AG04449 (cell line): ENCODE measurements at regions of chr1 and their contacts with region 1.

Region 1: GRCh38 chr1:39973503-39974135 is 18.7 kb downstream of the MFSD2A start:
- DNase-seq: no peak
- H3K4me3 ChIP-seq: no peak overlapping the region
- CTCF ChIP-seq: peak; percentile 92

Region 2: GRCh38 chr1:39816415-39817090 is 157.1 kb before region 1 on chr1:
- CTCF ChIA-PET with region 1: interaction called, 206 read pairs
- POLR2A ChIA-PET with region 1: no interaction called
- DNase-seq: peak; percentile 49
- H3K4me3 ChIP-seq: no peak overlapping the region
- CTCF ChIP-seq: peak; percentile 81

Region 3: DNA sequence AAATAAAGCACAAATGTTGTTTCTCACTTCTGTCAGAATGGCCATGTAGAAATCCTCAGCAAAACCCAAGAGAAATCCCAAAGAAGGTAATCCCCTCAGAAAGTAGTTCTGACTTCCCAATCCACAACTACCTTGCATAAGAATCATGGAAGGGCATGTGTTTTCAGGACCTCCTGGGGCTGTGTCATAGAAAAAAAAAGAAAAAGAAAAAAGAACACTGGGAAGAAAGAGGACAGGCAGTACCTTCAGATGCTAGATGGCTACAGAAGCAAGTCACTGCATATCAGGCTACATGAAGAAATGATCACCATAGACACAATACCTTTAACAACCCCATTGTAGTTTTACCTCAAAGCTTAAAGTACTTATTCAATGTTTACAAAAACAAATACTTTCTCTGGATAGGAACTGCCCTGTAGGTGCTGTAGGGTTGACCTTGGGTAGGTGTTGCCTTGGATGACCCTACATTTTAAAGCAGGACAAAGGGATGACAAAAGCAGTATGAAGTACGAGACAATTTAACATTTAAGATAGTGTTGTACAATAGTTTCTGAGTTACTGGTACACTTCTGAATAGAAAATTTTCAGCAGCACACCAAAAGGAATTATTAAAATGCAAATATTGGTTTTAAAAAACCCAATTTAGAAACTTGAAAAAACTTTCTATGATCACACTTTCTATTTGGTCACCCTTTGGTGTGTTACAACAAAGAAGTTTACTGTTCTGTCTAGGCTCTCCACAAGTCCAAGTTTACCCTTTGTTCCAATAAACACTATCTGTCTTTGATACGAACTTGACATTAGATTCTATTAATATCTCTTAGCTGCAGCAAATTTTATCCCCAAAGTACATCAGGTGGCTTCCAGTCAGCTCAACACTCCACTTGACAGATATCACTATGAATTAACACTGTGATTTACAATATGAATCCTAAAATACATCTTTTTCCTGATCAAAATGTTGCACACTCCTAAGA is 95.4 kb before region 1 on chr1:
- CTCF ChIA-PET with region 1: interaction called, 18 read pairs
- POLR2A ChIA-PET with region 1: no interaction called
- DNase-seq: no peak
- H3K4me3 ChIP-seq: no peak overlapping the region
- CTCF ChIP-seq: no peak

Region 4: GRCh38 chr1:39908534-39908933 is 65.1 kb before region 1 on chr1:
- CTCF ChIA-PET with region 1: interaction called, 10 read pairs
- POLR2A ChIA-PET with region 1: no interaction called
- DNase-seq: no peak
- H3K4me3 ChIP-seq: no peak overlapping the region
- CTCF ChIP-seq: no peak

Region 5: GRCh38 chr1:39933956-39934941 is 39.4 kb before region 1 on chr1:
- CTCF ChIA-PET with region 1: interaction called, 14 read pairs
- POLR2A ChIA-PET with region 1: interaction called, 3 read pairs
- DNase-seq: peak; percentile 88
- H3K4me3 ChIP-seq: no peak overlapping the region; the same call in 1 of the 2 replicates
- CTCF ChIP-seq: no peak

Region 6: DNA sequence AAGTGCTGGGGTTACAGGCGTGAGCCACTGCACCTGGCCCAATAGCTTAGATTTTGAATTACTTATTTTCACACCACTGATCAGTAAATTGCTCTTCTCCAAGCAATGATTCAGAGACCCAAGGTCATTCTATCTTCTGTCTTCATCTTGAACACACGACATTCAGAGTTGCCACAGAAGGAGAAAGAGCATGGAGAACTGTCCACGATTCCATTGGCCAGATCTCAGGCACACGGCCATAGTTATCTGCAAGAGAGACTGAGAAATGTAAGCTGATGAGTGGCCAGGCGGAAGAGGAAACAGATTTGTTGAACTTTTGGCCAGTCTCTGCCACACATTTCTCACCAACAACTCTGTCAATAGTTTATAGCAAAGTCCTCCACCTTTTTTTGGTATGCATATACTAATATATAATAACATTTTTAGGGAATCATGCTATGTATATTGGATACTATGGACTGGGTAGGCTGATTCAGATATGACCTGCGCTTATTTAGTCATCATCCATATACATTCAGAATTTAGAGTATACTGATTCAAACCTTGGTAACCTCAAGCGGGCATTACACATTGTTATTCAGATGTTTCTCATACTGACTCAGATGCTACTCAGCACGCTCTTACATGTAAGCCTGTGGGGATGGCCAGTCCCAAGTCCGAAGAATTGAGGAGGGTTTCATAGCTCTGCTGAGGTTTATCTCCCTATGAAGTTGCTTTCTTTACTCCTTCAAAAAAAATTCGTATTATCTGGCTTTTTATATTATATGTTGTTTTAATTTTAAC is 41.4 kb after region 1 on chr1:
- CTCF ChIA-PET with region 1: interaction called, 17 read pairs
- POLR2A ChIA-PET with region 1: no interaction called
- DNase-seq: peak; percentile 70
- H3K4me3 ChIP-seq: no peak overlapping the region
- CTCF ChIP-seq: no peak

Region 7: GRCh38 chr1:40243351-40243750 is 269.7 kb after region 1 on chr1:
- CTCF ChIA-PET with region 1: no interaction called
- POLR2A ChIA-PET with region 1: no interaction called
- DNase-seq: no peak
- H3K4me3 ChIP-seq: no peak overlapping the region
- CTCF ChIP-seq: no peak